IMR-90 (cell line): ENCODE measurements at regions of chr20 and their contacts with region 1.

Region 1: DNA sequence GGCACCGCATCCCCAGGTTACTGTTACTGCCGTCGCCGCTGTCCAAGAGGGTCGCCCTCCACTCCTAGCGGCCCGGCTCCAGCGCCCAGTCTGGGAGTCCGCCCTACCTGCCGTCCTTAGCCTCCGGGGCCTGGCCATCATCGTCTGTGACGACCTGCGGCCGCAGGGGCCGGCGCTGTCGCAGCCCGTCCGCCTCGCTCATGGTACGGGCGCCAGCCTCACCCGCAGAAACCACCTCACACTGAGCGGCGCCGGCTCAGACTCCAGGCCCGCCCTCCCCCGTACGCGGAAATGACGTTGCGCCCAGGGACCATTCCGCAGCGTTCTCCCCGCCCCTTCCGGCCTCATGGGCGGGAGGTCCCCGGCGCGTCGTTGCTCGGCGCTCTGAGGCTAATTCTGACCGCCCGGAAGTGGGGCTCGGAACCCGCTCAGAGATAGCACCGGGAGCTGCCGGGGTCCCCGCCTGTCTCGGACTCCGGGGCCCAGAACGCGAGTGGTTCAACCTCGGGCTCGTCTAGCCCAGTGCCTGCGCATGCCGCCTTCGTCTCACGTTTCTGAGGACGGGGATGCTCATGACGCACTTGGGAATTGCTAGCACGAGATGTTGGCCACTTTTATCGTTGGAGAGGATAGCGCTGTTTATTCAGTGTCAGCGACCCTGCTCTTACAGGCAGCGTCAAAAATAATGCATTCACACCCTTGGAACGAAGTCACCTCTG is at the start of gene APMAP:
- DNase-seq: peak; percentile 88
- ATAC-seq: peak; percentile 92
- H3K4me3 ChIP-seq: peak within 1 kb of the TSS; percentile 83
- H3K27ac ChIP-seq: peak within 1 kb of the TSS; percentile 87
- H3K4me1 ChIP-seq: no peaks in the 10 kb centered on the region
- H3K27me3 ChIP-seq: peaks cover 13% of the 10 kb centered on the region
- CTCF ChIP-seq: no peak
- POLR2A ChIP-seq: peak; percentile 96
- RAD21 ChIP-seq: no peak; the same call in 1 of the 2 replicates
- total RNA-seq, gene APMAP: 67.2 TPM in 2 replicates

Region 2: DNA sequence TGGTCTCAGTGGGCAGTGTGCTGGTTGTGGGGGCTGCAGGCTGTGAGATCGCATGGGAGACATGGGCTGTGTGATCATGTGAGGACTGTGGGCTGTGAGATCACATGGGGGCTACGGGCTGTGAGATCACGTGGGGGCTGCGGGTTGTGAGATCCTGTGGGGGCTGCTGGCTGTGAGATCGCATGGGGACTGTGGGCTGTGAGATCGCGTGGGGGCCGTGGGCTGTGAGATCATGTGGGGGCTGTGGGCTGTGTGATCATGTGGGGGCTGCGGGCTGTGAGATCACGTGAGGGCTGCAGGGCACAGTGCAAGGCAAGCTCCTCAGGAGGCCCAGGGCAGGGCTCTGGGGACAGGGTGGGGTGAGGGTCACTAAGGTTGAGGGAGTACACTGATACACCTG is 184.0 kb before region 1 on chr20:
- CTCF ChIA-PET with region 1: no interaction called
- POLR2A ChIA-PET with region 1: no interaction called
- dilution Hi-C with region 1: no loop called
- in situ Hi-C with region 1: no loop called
- intact Hi-C with region 1: no loop called
- DNase-seq: no peak
- ATAC-seq: no peak
- H3K4me3 ChIP-seq: no peak overlapping the region
- H3K27ac ChIP-seq: no peak overlapping the region
- H3K4me1 ChIP-seq: no peaks in the 10 kb centered on the region
- H3K27me3 ChIP-seq: peaks cover 2% of the 10 kb centered on the region; the same call in 1 of the 2 replicates
- CTCF ChIP-seq: no peak
- POLR2A ChIP-seq: no peak
- RAD21 ChIP-seq: no peak

Region 3: DNA sequence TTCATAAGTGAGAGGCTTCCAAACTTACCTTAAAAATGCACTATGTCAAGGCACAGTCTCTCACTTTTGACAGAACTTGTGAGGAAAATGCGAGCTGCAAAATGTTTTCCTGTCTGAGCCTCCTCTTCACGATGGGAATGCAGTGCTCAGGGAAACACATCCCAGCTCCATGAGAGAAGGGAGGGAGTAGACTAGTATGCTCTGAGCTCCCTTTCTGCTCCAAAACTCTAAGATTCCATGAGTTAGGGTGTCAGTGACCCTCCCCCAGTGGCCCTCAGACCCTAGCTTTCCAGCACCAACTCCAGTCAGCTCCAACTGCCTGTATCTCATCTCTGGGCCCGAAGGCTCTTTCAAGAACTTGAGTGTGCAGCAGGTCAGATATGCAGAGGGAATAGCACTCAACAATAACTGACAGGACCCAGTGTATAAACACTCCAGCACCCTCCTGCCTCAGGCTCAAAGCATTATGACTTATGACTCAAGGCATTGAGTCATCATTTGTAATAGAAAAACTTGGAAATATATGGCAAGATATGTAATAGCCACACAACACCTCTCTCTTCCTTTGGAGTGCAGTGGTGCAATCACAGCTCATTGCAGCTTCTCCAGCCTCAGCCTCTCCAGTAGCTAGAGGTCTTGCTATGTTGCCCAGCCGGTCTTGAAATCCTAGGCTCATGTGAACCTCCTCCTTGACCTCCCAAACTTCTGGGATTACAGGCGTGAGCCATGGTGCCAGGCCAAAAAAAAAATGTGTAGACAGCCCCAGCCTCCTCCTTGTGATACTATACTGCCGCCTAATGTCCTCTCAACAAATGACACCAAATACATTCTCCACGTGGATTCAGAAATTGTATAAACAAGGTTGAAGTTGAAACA is 186.2 kb after region 1 on chr20:
- CTCF ChIA-PET with region 1: interaction called, 4 read pairs
- POLR2A ChIA-PET with region 1: no interaction called
- dilution Hi-C with region 1: no loop called
- in situ Hi-C with region 1: no loop called
- intact Hi-C with region 1: loop called (anchors 1 kb)
- DNase-seq: peak; percentile 91
- ATAC-seq: peak; percentile 86
- H3K4me3 ChIP-seq: no peak overlapping the region
- H3K27ac ChIP-seq: no peak overlapping the region
- H3K4me1 ChIP-seq: peaks cover 5% of the 10 kb centered on the region
- H3K27me3 ChIP-seq: peaks cover 12% of the 10 kb centered on the region
- CTCF ChIP-seq: peak; percentile 81
- POLR2A ChIP-seq: no peak
- RAD21 ChIP-seq: peak; percentile 92

Region 4: DNA sequence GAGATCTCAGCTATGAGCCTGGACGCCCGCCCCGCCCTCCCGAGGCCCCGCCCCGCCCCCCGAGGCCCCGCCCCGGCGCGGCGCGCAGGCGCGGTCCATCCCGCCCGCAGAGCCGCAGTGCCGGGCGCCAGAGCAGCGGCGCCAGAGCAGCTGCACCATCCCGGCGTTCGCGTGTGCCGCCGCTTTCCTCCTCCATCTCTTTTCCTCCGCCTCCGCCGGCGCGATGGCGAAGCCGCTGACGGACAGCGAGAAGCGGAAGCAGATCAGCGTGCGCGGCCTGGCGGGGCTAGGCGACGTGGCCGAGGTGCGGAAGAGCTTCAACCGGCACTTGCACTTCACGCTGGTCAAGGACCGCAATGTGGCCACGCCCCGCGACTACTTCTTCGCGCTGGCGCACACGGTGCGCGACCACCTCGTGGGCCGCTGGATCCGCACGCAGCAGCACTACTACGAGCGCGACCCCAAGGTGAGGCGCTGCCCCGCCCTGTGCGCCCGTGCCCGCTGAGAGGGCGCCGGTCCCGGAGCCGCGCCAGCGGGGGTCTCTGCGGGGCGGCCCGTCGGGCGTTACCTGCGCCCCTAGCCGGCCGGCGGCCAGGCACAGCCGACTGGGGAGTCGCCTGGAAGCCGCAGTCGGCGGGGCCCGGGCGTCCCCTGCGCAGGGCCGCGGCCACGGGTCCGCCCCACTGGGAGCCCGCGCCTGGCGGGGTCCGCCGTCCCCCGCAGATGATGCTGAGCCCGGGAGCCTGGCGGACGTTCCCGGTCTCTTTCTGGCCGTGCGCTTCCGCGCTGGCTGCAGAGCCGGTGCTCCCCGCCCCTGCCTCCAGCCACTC is 255.5 kb after region 1 on chr20 and contains the start of gene PYGB:
- CTCF ChIA-PET with region 1: interaction called, 3 read pairs
- POLR2A ChIA-PET with region 1: no interaction called
- dilution Hi-C with region 1: no loop called
- in situ Hi-C with region 1: loop called (anchors 10 kb)
- intact Hi-C with region 1: loop called (anchors 2 kb)
- DNase-seq: peak; percentile 78
- ATAC-seq: peak; percentile 87
- H3K4me3 ChIP-seq: peak within 1 kb of the TSS; percentile 81
- H3K27ac ChIP-seq: peak within 1 kb of the TSS; percentile 98
- H3K4me1 ChIP-seq: peaks cover 13% of the 10 kb centered on the region
- H3K27me3 ChIP-seq: no peaks in the 10 kb centered on the region
- CTCF ChIP-seq: no peak
- POLR2A ChIP-seq: peak; percentile 93
- RAD21 ChIP-seq: no peak; the same call in 1 of the 2 replicates
- total RNA-seq, gene PYGB: 72.4 and 81.4 TPM in 2 replicates

Region 5: GRCh38 chr20:25294459-25295385 is 302.1 kb after region 1 on chr20:
- CTCF ChIA-PET with region 1: no interaction called
- POLR2A ChIA-PET with region 1: no interaction called
- dilution Hi-C with region 1: no loop called
- in situ Hi-C with region 1: no loop called
- intact Hi-C with region 1: loop called (anchors 2 kb)
- DNase-seq: peak; percentile 52
- ATAC-seq: peak; percentile 81
- H3K4me3 ChIP-seq: no peak overlapping the region
- H3K27ac ChIP-seq: no peak overlapping the region
- H3K4me1 ChIP-seq: peaks cover 7% of the 10 kb centered on the region
- H3K27me3 ChIP-seq: no peaks in the 10 kb centered on the region
- CTCF ChIP-seq: peak; percentile 99
- POLR2A ChIP-seq: no peak
- RAD21 ChIP-seq: peak; percentile 85

Region 6: GRCh38 chr20:25584905-25585704 is 592.5 kb after region 1 on chr20 and contains the start of gene NINL:
- CTCF ChIA-PET with region 1: no interaction called
- POLR2A ChIA-PET with region 1: no interaction called
- dilution Hi-C with region 1: no loop called
- in situ Hi-C with region 1: loop called (anchors 25 kb)
- intact Hi-C with region 1: no loop called
- DNase-seq: peak; percentile 48
- ATAC-seq: peak; percentile 92
- H3K4me3 ChIP-seq: peak within 1 kb of the TSS; percentile 52
- H3K27ac ChIP-seq: peak within 1 kb of the TSS; percentile 38
- H3K4me1 ChIP-seq: peaks cover 4% of the 10 kb centered on the region
- H3K27me3 ChIP-seq: no peaks in the 10 kb centered on the region
- CTCF ChIP-seq: no peak
- POLR2A ChIP-seq: peak; percentile 85
- RAD21 ChIP-seq: no peak
- total RNA-seq, gene NINL: 3.0 and 3.6 TPM in 2 replicates

Region 7: GRCh38 chr20:25865380-25866118 is 872.9 kb after region 1 on chr20:
- CTCF ChIA-PET with region 1: no interaction called
- POLR2A ChIA-PET with region 1: no interaction called
- dilution Hi-C with region 1: no loop called
- in situ Hi-C with region 1: loop called (anchors 25 kb)
- intact Hi-C with region 1: no loop called
- DNase-seq: peak; percentile 41
- ATAC-seq: peak; percentile 52; the same call in 1 of the 2 replicates
- H3K4me3 ChIP-seq: no peak overlapping the region
- H3K27ac ChIP-seq: no peak overlapping the region
- H3K4me1 ChIP-seq: no peaks in the 10 kb centered on the region
- H3K27me3 ChIP-seq: peaks cover 18% of the 10 kb centered on the region
- CTCF ChIP-seq: no peak
- POLR2A ChIP-seq: no peak
- RAD21 ChIP-seq: no peak